AG04449 (cell line): ENCODE measurements at regions of chr11 and their contacts with region 1.

Region 1: GRCh38 chr11:67265633-67266423 is 445 bp upstream of the GRK2 start:
- DNase-seq: no peak
- H3K4me3 ChIP-seq: peak overlapping the region; percentile 53
- CTCF ChIP-seq: peak; percentile 73

Region 2: GRCh38 chr11:67202045-67202444 is 63.8 kb before region 1 on chr11:
- CTCF ChIA-PET with region 1: no interaction called
- POLR2A ChIA-PET with region 1: no interaction called
- DNase-seq: no peak
- H3K4me3 ChIP-seq: no peak overlapping the region
- CTCF ChIP-seq: no peak

Region 3: GRCh38 chr11:67252831-67253239 is 13.0 kb before region 1 on chr11:
- CTCF ChIA-PET with region 1: interaction called, 126 read pairs
- POLR2A ChIA-PET with region 1: no interaction called
- DNase-seq: no peak
- H3K4me3 ChIP-seq: no peak overlapping the region
- CTCF ChIP-seq: peak; percentile 36

Region 4: DNA sequence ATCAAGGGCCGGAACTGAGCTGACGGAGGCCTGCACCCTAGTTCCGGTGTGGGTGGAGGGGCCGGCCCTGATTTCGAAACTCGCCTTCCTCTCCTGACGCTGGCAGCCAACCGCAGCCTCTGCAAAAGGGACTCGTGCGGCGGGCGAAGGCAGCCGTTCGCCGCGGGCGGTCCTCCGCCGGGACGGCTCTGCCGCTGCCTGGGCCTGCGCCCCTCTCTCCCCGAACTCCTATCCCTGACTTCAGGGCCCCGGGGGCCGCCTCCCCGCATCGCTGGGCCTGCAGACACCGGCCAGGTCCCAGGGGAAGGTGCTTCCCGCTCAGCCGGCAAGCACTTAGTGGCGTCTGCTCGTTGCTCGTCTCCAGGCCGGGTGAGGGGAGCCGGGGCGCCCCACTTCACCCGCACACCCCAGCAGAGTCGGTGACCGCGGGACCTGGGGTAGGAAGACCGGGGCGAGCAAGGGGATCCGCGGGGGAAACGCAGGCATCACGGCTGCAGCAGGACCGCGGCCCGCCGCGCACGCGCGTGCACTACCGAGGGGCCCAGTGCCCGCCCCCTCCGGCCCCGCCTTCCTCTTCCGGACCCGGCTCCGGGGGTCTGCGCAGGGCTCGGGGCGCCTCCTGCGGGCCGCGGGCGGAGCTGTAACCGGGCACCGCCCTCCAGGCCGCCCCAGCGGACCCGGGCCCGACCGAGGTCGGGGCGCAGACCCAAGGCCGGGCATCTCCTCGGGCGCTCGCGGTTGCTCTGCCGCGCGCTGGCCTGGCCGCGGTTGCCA is 22.8 kb after region 1 on chr11:
- CTCF ChIA-PET with region 1: interaction called, 48 read pairs
- POLR2A ChIA-PET with region 1: interaction called, 3 read pairs
- DNase-seq: peak; percentile 59
- H3K4me3 ChIP-seq: peak overlapping the region; percentile 77
- CTCF ChIP-seq: peak; percentile 55

Region 5: GRCh38 chr11:67332081-67332691 is 66.4 kb after region 1 on chr11:
- CTCF ChIA-PET with region 1: interaction called, 10 read pairs
- POLR2A ChIA-PET with region 1: no interaction called
- DNase-seq: no peak
- H3K4me3 ChIP-seq: no peak overlapping the region
- CTCF ChIP-seq: no peak

Region 6: GRCh38 chr11:67373925-67374618 is 108.2 kb after region 1 on chr11:
- CTCF ChIA-PET with region 1: interaction called, 167 read pairs
- POLR2A ChIA-PET with region 1: interaction called, 3 read pairs
- DNase-seq: peak; percentile 95
- H3K4me3 ChIP-seq: peak overlapping the region; percentile 67
- CTCF ChIP-seq: peak; percentile 47

Region 7: DNA sequence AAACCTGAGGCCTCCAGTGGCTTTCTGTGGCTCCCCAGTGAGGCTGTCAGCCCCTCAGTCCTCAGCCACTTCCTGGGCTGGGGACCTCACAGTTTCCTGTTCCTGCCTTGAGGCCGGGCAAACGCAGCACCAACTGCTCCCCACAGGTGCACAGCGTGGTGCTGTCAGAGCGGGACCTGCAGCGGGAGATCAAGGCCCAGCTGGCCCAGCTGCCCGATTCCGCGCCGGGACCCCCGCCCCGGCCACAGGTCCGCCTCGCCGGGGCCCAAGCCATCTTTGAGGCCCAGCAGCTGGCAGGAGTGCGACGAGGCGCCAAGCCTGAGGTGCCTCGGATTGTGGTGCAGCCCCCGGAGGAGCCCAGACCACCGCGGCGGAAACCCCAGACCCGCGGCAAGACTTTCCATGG is 143.4 kb after region 1 on chr11:
- CTCF ChIA-PET with region 1: no interaction called
- POLR2A ChIA-PET with region 1: no interaction called
- DNase-seq: no peak
- H3K4me3 ChIP-seq: no peak overlapping the region
- CTCF ChIP-seq: no peak

Region 8: DNA sequence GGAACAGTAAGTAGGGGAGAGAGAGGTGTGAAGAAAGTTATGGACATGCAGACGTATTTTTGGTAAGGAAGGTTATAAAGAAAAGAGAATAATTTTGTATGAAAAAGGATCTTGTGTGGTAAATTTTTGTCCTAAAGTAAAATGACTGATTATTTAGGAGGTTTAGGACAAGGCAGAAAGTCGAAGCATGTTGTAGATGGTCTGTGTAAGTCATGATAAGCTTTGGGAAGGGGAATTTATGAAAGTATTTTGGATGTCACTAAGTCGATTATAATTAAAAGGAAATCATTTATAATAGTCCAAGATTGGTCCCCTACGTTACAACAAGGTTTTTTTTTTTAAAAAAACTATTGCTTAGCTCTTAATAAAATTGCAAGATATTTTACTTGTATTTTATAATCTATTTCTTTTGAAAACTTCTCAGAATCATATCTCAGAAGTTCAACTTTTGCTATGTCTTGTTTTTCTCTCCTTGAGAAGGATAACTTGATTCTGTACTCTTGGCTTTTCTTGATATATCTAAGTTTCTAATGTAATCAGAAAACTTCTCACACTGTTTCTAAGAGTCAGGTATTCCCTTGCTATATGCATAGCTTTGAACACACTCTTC is 268.3 kb after region 1 on chr11:
- CTCF ChIA-PET with region 1: no interaction called
- POLR2A ChIA-PET with region 1: no interaction called
- DNase-seq: no peak
- H3K4me3 ChIP-seq: no peak overlapping the region
- CTCF ChIP-seq: no peak

Region 9: GRCh38 chr11:68121067-68121899 is 855.5 kb after region 1 on chr11 and contains the start of gene CHKA:
- CTCF ChIA-PET with region 1: no interaction called
- POLR2A ChIA-PET with region 1: no interaction called
- DNase-seq: no peak
- H3K4me3 ChIP-seq: peak within 1 kb of the TSS; percentile 63
- CTCF ChIP-seq: no peak